Activated CD4-positive, alpha-beta memory T cell treated with anti-CD3 and anti-CD28 coated beads for 36 hours (primary cell): ENCODE measurements at regions of chr7 and their contacts with region 1.

Region 1: DNA sequence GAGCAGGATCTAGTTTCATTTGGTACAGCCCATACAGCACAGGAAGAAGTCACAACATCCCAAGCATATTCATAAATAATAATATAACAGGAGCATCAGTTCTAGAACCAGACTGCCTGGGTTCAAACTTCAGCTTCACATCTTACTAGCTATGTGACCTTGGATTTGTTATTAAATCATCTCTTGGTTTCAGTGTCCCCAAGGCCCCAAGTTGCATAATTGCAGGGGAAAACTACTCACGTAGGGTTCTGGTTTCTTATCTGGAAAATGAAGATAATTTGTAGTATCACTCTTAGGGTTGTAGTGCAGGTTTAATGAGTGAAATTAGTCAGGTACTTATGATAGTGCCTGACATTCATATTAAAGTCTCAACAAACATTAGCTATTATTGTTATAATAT is 5.5 kb upstream of the IQUB start:
- DNase-seq: no peak
- H3K4me3 Mint-ChIP-seq: no peak overlapping the region
- H3K27ac Mint-ChIP-seq: no peak overlapping the region
- H3K4me1 Mint-ChIP-seq: peaks cover 14% of the 10 kb centered on the region
- H3K27me3 Mint-ChIP-seq: no peaks in the 10 kb centered on the region

Region 2: DNA sequence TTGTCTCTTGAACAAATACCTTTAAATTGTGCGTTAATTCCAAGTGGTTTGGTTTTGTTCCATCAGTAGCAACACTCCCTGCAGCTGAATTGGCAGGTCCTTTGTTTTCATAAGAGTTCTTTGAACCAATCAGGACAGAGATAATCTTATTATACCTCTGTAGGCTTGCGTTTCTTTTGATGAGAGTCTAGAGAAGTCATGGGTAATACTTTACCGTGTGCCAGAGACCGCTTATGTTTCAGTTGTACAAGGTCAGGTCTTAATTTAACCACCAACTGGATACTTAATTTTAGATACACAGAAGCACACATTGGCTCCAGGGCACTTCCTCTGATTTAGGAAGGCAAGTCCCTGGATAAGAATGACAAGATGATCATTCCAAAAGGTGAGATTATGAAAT is 61.7 kb after region 1 on chr7 and contains the start of gene ASB15:
- CTCF ChIA-PET with region 1: no interaction called
- POLR2A ChIA-PET with region 1: no interaction called
- intact Hi-C with region 1: loop called (anchors 2 kb)
- DNase-seq: no peak
- H3K4me3 Mint-ChIP-seq: no peak within 1 kb of the TSS
- H3K27ac Mint-ChIP-seq: no peak within 1 kb of the TSS
- H3K4me1 Mint-ChIP-seq: no peaks in the 10 kb centered on the region
- H3K27me3 Mint-ChIP-seq: peaks cover 4% of the 10 kb centered on the region
- total RNA-seq, gene ASB15: not detected

Region 3: DNA sequence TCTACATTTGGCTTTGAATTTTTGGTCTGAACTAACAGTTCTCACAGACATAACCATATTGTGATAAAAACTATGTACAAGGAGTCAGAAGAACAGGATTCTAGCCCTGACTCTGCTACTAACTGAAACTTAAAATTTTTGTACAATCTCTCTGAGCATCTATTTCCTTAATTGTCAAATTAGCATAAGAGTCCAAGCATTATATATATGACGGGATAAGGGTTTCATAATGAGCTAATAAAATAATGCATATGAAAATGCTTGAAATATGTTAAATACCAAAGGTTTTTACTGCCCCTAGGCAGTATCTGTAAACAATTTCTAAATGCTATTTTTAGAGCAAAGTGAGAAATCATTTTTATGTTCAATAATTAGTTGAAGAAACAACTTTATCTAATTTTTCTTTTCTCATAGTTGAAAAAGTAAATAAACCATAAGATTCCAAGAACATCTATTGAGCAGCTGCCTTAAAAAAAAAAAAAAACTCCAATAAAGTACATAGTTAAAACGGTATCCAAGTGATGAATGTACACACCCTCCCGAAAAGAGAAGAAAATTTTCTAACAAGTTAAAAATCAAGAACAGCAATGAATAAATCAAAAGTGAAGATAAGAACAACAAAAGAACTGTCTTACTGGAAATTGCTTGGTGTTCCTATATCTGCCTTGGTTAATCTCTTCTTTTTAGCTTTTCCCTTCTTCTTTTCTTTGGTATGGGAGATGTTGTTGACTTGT is 156.2 kb after region 1 on chr7:
- CTCF ChIA-PET with region 1: no interaction called
- POLR2A ChIA-PET with region 1: no interaction called
- intact Hi-C with region 1: no loop called
- DNase-seq: no peak
- H3K4me3 Mint-ChIP-seq: no peak overlapping the region
- H3K27ac Mint-ChIP-seq: no peak overlapping the region
- H3K4me1 Mint-ChIP-seq: no peaks in the 10 kb centered on the region
- H3K27me3 Mint-ChIP-seq: no peaks in the 10 kb centered on the region